ENCODE measurements at regions of chr4 and their contacts with region 1.

Region 1: GRCh38 chr4:164997324-164997723 is 19.9 kb upstream of the TRIM61 start:
- DNase-seq: no peak
- ATAC-seq: no peak
- H3K4me3 ChIP-seq: no peak overlapping the region
- H3K27ac ChIP-seq: no peak overlapping the region
- H3K4me1 ChIP-seq: no peaks in the 10 kb centered on the region
- H3K27me3 ChIP-seq: no peaks in the 10 kb centered on the region
- CTCF ChIP-seq: 0 out of 2 replicates have a peak, but pooled peaks have one; percentile 3
- POLR2A ChIP-seq: no peak
- RAD21 ChIP-seq: no peak

Region 2: GRCh38 chr4:164779811-164780216 is 217.5 kb before region 1 on chr4:
- CTCF ChIA-PET with region 1: no interaction called
- POLR2A ChIA-PET with region 1: no interaction called
- dilution Hi-C with region 1: no loop called
- in situ Hi-C with region 1: no loop called
- intact Hi-C with region 1: loop called (anchors 2 kb)
- DNase-seq: peak; percentile 31
- ATAC-seq: peak; percentile 51
- H3K4me3 ChIP-seq: no peak overlapping the region
- H3K27ac ChIP-seq: no peak overlapping the region
- H3K4me1 ChIP-seq: no peaks in the 10 kb centered on the region
- H3K27me3 ChIP-seq: no peaks in the 10 kb centered on the region
- CTCF ChIP-seq: peak; percentile 63
- POLR2A ChIP-seq: no peak
- RAD21 ChIP-seq: peak; percentile 58